ENCODE measurements at regions of chr6 and their contacts with region 1.

Region 1: GRCh38 chr6:112029045-112029822 is 24.7 kb upstream of the CCN6 start:
- DNase-seq: peak; percentile 36 to 62 (median 43)
- H3K4me3 ChIP-seq: no peak overlapping the region
- H3K4me3 Mint-ChIP-seq: peak overlapping the region in 7 of 8 donors; percentile 35 to 91 (median 74)
- H3K27ac ChIP-seq: peak overlapping the region; percentile 61
- H3K27ac Mint-ChIP-seq: peak overlapping the region; percentile 84 to 98 (median 94)
- H3K4me1 ChIP-seq: peaks cover 76% of the 10 kb centered on the region
- H3K4me1 Mint-ChIP-seq: peaks cover 55 to 79% (median 68%) of the 10 kb centered on the region in 4 donors
- H3K27me3 ChIP-seq: no peaks in the 10 kb centered on the region
- H3K27me3 Mint-ChIP-seq: no peaks in the 10 kb centered on the region

Region 2: GRCh38 chr6:112010328-112010727 is 18.9 kb before region 1 on chr6:
- CTCF ChIA-PET with region 1: interaction called, 184 read pairs
- POLR2A ChIA-PET with region 1: interaction called, 85 read pairs
- intact Hi-C with region 1: loop called (anchors 1 kb)
- DNase-seq: peak in 4 of 5 donors; percentile 33 to 44 (median 38)
- H3K4me3 ChIP-seq: no peak overlapping the region
- H3K4me3 Mint-ChIP-seq: no peak overlapping the region
- H3K27ac ChIP-seq: no peak overlapping the region
- H3K27ac Mint-ChIP-seq: peak overlapping the region in 3 of 7 donors; percentile 0 to 77 (median 8)
- H3K4me1 ChIP-seq: peaks cover 4% of the 10 kb centered on the region
- H3K4me1 Mint-ChIP-seq: peaks cover 2 to 15% (median 5%) of the 10 kb centered on the region in 4 donors
- H3K27me3 ChIP-seq: no peaks in the 10 kb centered on the region
- H3K27me3 Mint-ChIP-seq: no peaks in the 10 kb centered on the region

Region 3: GRCh38 chr6:112018619-112019416 is 10.4 kb before region 1 on chr6:
- CTCF ChIA-PET with region 1: interaction called, 184 read pairs
- POLR2A ChIA-PET with region 1: interaction called, 85 read pairs
- intact Hi-C with region 1: loop called (anchors 1 kb)
- DNase-seq: no peak
- H3K4me3 ChIP-seq: no peak overlapping the region
- H3K4me3 Mint-ChIP-seq: no peak overlapping the region
- H3K27ac ChIP-seq: no peak overlapping the region
- H3K27ac Mint-ChIP-seq: peak overlapping the region in 2 of 7 donors; percentile 59 to 73
- H3K4me1 ChIP-seq: peaks cover 36% of the 10 kb centered on the region
- H3K4me1 Mint-ChIP-seq: peaks cover 21 to 56% (median 41%) of the 10 kb centered on the region in 4 donors
- H3K27me3 ChIP-seq: no peaks in the 10 kb centered on the region
- H3K27me3 Mint-ChIP-seq: no peaks in the 10 kb centered on the region

Measured in CD4-positive, alpha-beta memory T cell (primary cell).